ENCODE measurements at regions of chr10 and their contacts with region 1.

Region 1: GRCh38 chr10:5434017-5434753 is 21.8 kb downstream of the NET1 start:
- DNase-seq: peak in 5 of 9 donors; percentile 31 to 54 (median 38)
- ATAC-seq: peak; percentile 84
- H3K4me3 ChIP-seq: no peak overlapping the region
- H3K4me3 Mint-ChIP-seq: peak overlapping the region in 3 of 10 donors; percentile 8 to 25 (median 10)
- H3K27ac ChIP-seq: no peak overlapping the region
- H3K27ac Mint-ChIP-seq: peak overlapping the region in 4 of 9 donors; percentile 49 to 81 (median 56)
- H3K4me1 ChIP-seq: peaks cover 0 to 10% of the 10 kb centered on the region in 2 donors
- H3K4me1 Mint-ChIP-seq: peaks cover 4 to 15% (median 11%) of the 10 kb centered on the region in 7 donors
- H3K27me3 ChIP-seq: peaks cover 0 to 3% of the 10 kb centered on the region in 2 donors
- H3K27me3 Mint-ChIP-seq: no peaks in the 10 kb centered on the region

Region 2: DNA sequence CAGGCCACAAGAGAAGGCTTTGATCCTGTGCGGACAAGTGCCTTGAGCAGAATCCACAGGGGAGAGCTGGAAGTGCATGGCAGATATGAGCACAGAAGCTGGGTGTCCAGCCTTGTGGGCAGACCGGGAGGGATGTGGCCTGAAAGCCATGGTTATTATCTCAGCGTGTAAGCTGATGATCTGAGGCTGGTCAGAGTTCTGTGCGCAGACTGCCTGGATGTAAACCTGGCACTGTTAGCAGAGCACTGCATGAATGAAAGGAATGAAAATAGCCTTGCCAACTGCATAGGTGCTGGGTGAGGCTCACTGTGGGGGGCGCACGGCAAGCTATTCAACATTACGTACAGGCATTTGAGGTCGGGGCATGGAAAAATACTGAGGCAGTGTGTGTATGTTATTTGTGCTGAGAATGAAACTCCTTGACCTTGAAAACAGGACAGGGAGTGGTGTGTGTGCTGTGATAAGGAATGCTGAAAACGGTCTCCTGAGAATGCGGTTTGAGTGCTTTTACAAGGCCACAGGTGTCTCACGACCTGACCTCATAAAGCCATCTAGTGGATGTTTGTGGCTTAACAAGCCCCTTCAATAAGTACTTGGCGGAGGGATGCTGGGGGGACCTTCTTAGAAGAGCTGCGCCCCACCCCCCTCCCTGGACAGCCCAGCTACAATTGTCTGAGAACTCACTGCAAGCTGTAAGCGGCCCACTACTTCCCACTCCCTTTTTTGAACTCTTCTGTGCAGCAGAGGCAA is 452.3 kb before region 1 on chr10:
- CTCF ChIA-PET with region 1: no interaction called
- POLR2A ChIA-PET with region 1: no interaction called
- intact Hi-C with region 1: loop called in 1 of 2 experiments (anchors 1 kb)
- DNase-seq: peak in 2 of 9 donors; percentile 3 to 18
- ATAC-seq: no peak
- H3K4me3 ChIP-seq: no peak overlapping the region
- H3K4me3 Mint-ChIP-seq: no peak overlapping the region
- H3K27ac ChIP-seq: no peak overlapping the region
- H3K27ac Mint-ChIP-seq: peak overlapping the region in 1 of 9 donors; percentile 67
- H3K4me1 ChIP-seq: no peaks in the 10 kb centered on the region
- H3K4me1 Mint-ChIP-seq: peaks cover 0 to 9% (median 0%) of the 10 kb centered on the region in 7 donors
- H3K27me3 ChIP-seq: no peaks in the 10 kb centered on the region
- H3K27me3 Mint-ChIP-seq: peaks cover 0 to 5% (median 0%) of the 10 kb centered on the region in 5 donors

Region 3: DNA sequence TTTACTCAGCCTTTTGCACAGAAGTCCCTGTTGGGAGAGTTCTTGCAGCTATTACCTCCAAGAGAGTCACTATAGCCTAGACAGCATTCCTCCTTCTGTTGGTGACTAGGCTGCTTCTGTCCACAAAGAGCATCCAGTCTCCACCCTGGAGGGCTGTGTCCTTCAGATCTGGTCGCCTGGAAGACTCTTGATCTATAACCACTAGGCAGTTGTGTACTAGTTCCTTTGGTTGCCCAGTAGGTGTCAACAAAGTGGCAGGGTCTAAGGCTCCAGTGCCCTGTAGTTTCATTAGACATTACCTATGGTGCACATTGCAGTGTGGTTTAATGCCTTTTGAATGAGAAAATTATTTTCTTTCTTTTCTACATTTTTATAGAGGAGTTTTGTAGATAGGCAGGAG is 419.2 kb before region 1 on chr10:
- CTCF ChIA-PET with region 1: no interaction called
- POLR2A ChIA-PET with region 1: no interaction called
- intact Hi-C with region 1: loop called in 1 of 2 experiments (anchors 1 kb)
- DNase-seq: peak in 1 of 9 donors; percentile 1
- ATAC-seq: no peak
- H3K4me3 ChIP-seq: no peak overlapping the region
- H3K4me3 Mint-ChIP-seq: no peak overlapping the region
- H3K27ac ChIP-seq: no peak overlapping the region
- H3K27ac Mint-ChIP-seq: no peak overlapping the region
- H3K4me1 ChIP-seq: no peaks in the 10 kb centered on the region
- H3K4me1 Mint-ChIP-seq: no peaks in the 10 kb centered on the region
- H3K27me3 ChIP-seq: no peaks in the 10 kb centered on the region
- H3K27me3 Mint-ChIP-seq: peaks cover 0 to 14% (median 4%) of the 10 kb centered on the region in 5 donors

Region 4: DNA sequence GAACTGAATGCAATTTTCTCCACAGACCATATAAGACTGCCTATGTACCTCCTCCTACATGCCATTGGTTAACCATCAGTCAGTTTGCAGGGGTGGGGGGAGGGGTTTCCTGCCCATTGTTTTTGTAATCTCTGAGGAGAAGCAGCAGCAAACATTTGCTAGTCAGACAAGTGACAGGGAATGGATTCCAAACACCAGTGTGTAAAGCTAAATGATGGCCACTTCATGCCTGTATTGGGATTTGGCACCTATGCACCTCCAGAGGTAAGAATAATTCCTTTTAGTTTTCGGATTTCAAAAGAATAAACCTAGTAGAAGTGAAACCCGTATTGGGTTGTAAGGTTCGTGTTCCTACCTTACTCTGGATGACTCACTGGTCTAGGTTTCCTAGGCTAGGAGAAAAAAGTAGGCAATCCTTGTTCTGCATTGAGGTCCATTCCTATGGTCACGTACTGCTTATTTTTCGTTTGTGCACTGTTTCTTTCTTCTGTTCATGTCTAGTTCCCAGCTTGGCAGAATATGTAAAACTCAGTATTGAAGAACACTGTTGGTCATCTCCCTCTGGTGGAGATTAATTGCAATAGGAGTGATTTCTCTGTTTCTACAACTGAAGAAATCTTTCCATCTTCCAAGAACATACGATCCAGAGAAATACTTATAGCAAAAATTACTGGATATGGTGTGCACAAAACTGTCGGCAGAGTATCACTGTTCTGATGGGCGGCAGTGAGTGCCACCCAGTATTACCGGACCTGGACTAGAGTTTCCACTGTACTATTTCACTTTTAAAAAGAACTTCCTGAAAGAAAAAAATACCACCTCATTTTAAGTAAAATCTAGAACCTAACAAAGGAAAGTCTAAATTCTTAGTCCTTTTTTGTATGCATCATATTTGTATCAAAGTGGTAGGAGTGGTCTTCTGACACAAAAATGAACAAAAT is 339.6 kb before region 1 on chr10 and contains the start of gene AKR1C3:
- CTCF ChIA-PET with region 1: no interaction called
- POLR2A ChIA-PET with region 1: no interaction called
- intact Hi-C with region 1: loop called (anchors 1 to 5 kb)
- DNase-seq: peak in 6 of 9 donors; percentile 24 to 53 (median 36)
- ATAC-seq: peak; percentile 77
- H3K4me3 ChIP-seq: peak within 1 kb of the TSS; percentile 69
- H3K4me3 Mint-ChIP-seq: peak within 1 kb of the TSS; percentile 71 to 95 (median 91)
- H3K27ac ChIP-seq: no peak within 1 kb of the TSS
- H3K27ac Mint-ChIP-seq: peak within 1 kb of the TSS in 6 of 9 donors; percentile 35 to 90 (median 61)
- H3K4me1 ChIP-seq: no peaks in the 10 kb centered on the region
- H3K4me1 Mint-ChIP-seq: peaks cover 0 to 25% (median 15%) of the 10 kb centered on the region in 7 donors
- H3K27me3 ChIP-seq: no peaks in the 10 kb centered on the region
- H3K27me3 Mint-ChIP-seq: peaks cover 0 to 44% (median 13%) of the 10 kb centered on the region in 5 donors
- total RNA-seq, gene AKR1C3: 2.9 to 14.1 (median 5.8) TPM

Region 5: DNA sequence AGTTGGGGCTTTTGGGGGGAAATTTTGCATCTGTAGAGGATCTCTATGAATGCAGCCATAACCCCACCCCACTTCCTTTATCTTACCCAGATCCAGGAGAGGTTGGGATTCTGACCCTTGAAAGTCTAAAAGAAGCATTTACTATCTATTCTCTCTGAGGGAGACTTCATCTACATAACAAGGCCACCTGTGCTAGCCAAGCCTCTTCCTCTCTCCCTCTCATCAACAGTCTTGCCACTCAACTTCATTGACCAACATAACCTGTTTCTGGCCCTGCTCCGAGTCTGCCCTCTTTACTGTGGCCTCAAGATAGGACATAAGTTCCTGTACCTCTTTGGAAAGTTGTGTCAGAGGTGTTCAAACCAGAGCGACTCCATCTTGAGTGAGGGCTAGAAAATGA is 49.0 kb before region 1 on chr10:
- CTCF ChIA-PET with region 1: interaction called, 8 read pairs
- POLR2A ChIA-PET with region 1: no interaction called
- intact Hi-C with region 1: loop called in 1 of 2 experiments (anchors 1 kb)
- DNase-seq: no peak
- ATAC-seq: no peak
- H3K4me3 ChIP-seq: no peak overlapping the region
- H3K4me3 Mint-ChIP-seq: peak overlapping the region in 1 of 10 donors; percentile 13
- H3K27ac ChIP-seq: no peak overlapping the region
- H3K27ac Mint-ChIP-seq: no peak overlapping the region
- H3K4me1 ChIP-seq: no peaks in the 10 kb centered on the region
- H3K4me1 Mint-ChIP-seq: peaks cover 0 to 5% (median 0%) of the 10 kb centered on the region in 7 donors
- H3K27me3 ChIP-seq: no peaks in the 10 kb centered on the region
- H3K27me3 Mint-ChIP-seq: peaks cover 0 to 15% (median 5%) of the 10 kb centered on the region in 5 donors

Region 6: DNA sequence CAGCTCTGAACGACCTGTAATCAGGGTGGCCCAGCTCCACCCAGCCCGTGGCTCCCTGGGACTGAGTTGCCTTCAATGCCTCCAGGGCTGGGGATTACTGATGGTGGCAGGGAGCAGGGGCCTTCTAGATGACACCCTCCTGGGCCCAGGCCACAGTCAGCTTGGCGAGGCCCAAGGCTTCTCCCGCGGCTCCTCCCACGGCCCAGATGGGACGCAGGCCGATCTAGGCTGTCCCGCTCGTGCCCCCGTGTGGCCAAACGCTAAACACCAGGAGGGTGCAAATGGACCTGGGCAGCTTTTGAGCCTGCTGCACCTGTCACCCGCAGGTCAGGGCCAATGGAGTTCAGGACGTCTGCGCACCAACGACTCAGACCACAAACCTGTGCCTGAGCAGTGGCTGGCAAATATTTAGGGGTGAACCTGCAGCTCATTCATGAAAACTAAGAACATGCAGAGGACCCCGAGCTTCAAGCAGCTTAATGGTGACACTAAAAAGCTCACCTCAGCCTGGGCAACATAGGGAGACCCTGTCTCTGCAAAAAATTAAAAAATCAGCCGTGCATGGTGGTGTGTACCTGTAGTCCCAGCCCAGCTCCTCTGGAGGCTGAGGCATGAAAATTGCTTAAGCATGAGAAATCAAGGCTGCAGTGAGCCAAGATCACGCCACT is 189.0 kb after region 1 on chr10:
- CTCF ChIA-PET with region 1: interaction called, 340 read pairs
- POLR2A ChIA-PET with region 1: interaction called, 3 read pairs
- intact Hi-C with region 1: no loop called
- DNase-seq: peak; percentile 62 to 82 (median 70)
- ATAC-seq: peak; percentile 96
- H3K4me3 ChIP-seq: no peak overlapping the region
- H3K4me3 Mint-ChIP-seq: peak overlapping the region in 1 of 10 donors; percentile 32
- H3K27ac ChIP-seq: no peak overlapping the region
- H3K27ac Mint-ChIP-seq: peak overlapping the region in 1 of 9 donors; percentile 41
- H3K4me1 ChIP-seq: no peaks in the 10 kb centered on the region
- H3K4me1 Mint-ChIP-seq: peaks cover 0 to 4% (median 0%) of the 10 kb centered on the region in 7 donors
- H3K27me3 ChIP-seq: no peaks in the 10 kb centered on the region
- H3K27me3 Mint-ChIP-seq: peaks cover 0 to 4% (median 0%) of the 10 kb centered on the region in 5 donors

Region 7: GRCh38 chr10:5927306-5927705 is 493.1 kb after region 1 on chr10:
- CTCF ChIA-PET with region 1: no interaction called
- POLR2A ChIA-PET with region 1: no interaction called
- intact Hi-C with region 1: no loop called
- DNase-seq: no peak
- ATAC-seq: no peak
- H3K4me3 ChIP-seq: no peak overlapping the region
- H3K4me3 Mint-ChIP-seq: no peak overlapping the region
- H3K27ac ChIP-seq: no peak overlapping the region
- H3K27ac Mint-ChIP-seq: peak overlapping the region in 2 of 9 donors; percentile 54 to 82
- H3K4me1 ChIP-seq: no peaks in the 10 kb centered on the region
- H3K4me1 Mint-ChIP-seq: peaks cover 0 to 3% (median 0%) of the 10 kb centered on the region in 7 donors
- H3K27me3 ChIP-seq: no peaks in the 10 kb centered on the region
- H3K27me3 Mint-ChIP-seq: no peaks in the 10 kb centered on the region

Measured in naive thymus-derived CD4-positive, alpha-beta T cell (primary cell).